ENCODE measurements at regions of chr4 and their contacts with region 1.

Region 1: DNA sequence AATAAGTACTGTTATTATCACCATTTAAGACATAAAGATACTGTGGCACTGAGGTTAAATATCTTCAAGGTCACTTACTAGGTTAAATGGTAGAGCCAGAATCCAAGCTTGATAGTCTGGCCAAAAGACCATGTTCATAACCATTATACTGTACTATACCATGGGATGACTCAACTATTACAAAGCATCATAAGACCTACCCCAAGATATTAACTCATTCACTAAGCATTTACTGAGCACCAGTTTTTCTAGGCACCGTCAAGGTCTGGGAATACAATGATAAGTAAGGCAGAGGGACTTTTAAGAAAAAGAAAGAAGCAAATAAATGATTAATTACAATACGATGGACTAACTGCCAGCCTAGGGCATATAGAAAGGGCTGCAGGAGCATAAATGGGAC is 95.5 kb upstream of the KCTD8 start:
- DNase-seq: no peak
- ATAC-seq: no peak
- H3K4me3 ChIP-seq: no peak overlapping the region
- H3K27ac ChIP-seq: no peak overlapping the region
- H3K4me1 ChIP-seq: no peaks in the 10 kb centered on the region
- H3K27me3 ChIP-seq: no peaks in the 10 kb centered on the region
- CTCF ChIP-seq: no peak
- POLR2A ChIP-seq: no peak

Region 2: GRCh38 chr4:44629280-44629866 is 85.2 kb after region 1 on chr4:
- in situ Hi-C with region 1: loop called in 1 of 4 experiments (anchors 25 kb)
- intact Hi-C with region 1: no loop called
- DNase-seq: no peak
- ATAC-seq: peak; percentile 54 to 91
- H3K4me3 ChIP-seq: no peak overlapping the region
- H3K27ac ChIP-seq: no peak overlapping the region
- H3K4me1 ChIP-seq: no peaks in the 10 kb centered on the region
- H3K27me3 ChIP-seq: no peaks in the 10 kb centered on the region
- CTCF ChIP-seq: peak in 4 of 5 experiments; percentile 32 to 66 (median 52)
- POLR2A ChIP-seq: no peak